ENCODE measurements at regions of chr2 and their contacts with region 1.

Region 1: DNA sequence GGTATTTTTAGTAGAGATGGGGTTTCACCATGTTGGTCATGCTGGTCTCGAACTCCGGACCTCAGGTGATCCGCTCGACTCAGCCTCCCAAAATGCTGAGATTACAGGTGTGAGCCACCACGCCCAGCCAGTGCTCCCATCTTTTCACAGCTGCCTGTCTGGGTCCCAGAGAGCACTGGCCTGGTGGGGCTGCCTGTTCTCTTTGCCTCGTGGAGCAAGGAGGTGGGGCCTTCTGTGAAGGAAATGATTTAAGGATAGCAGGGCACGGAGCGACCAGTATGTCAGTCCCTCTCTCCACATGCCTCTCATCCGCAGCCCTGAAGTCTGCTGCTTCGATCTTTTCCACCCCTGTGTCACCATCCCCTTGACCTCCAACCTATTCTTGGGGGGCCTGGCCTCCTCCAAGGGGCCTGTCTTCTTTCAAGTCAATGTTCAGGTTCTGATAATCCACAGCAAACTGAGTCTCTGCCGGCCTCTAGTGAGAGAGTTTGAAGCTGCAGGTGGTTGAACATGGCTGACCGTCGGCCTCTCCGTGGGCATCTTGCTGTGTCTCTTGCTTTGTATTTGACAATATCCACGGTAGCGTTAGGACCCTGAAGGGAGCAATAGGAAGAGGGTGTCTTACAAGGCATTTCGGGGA is 28.2 kb upstream of the GIGYF2 start:
- DNase-seq: peak; percentile 28
- H3K4me3 ChIP-seq: no peak overlapping the region
- H3K27ac ChIP-seq: no peak overlapping the region
- H3K4me1 ChIP-seq: no peaks in the 10 kb centered on the region
- H3K27me3 ChIP-seq: peaks cover 0 to 4% of the 10 kb centered on the region in 2 experiments
- CTCF ChIP-seq: peak; percentile 18 to 47
- POLR2A ChIP-seq: no peak

Region 2: DNA sequence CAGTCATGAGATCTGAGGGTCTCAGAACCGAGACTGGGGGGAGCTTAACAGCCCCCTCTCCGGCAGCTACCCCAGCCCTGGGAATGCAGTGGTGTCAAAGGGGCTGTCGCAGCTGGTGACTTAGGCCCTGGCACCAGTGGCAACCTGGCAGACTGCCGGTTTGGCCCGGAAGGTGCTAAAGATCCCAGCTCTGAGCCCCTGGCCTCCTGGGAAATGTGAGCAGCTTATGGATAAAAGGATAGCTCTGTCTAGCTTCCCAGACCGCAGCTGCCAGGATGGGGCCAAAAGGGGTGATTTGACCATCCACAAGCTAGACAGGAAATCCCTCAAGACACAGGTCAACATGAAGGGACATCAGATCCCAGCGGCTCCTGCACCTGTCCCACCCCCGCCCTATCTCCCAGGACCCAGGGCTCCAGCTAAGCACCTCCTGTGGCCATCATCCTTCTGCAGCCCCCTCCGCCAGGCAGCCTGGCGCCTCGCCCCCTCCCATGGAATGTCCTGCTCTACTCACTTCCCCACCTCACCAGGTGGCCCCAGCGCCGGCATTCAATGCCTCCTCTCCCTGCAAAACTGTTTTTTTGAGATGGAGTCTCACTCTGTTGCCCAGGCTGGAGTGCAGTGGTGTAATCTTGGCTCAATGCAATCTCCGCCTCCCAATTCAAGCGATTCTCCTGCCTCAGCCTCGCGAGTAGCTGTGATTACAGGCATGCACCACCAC is 68.7 kb before region 1 on chr2:
- CTCF ChIA-PET with region 1: interaction called, 10 read pairs
- POLR2A ChIA-PET with region 1: no interaction called
- dilution Hi-C with region 1: no loop called
- intact Hi-C with region 1: no loop called
- DNase-seq: no peak
- H3K4me3 ChIP-seq: no peak overlapping the region
- H3K27ac ChIP-seq: no peak overlapping the region
- H3K4me1 ChIP-seq: no peaks in the 10 kb centered on the region
- H3K27me3 ChIP-seq: peaks cover 0 to 2% of the 10 kb centered on the region in 2 experiments
- CTCF ChIP-seq: no peak
- POLR2A ChIP-seq: no peak

Measured in endothelial cell of umbilical vein (primary cell).